CD4-positive, alpha-beta memory T cell (primary cell): ENCODE measurements at regions of chr1 and their contacts with region 1.

Region 1: GRCh38 chr1:150235852-150236613 is at the start of gene ANP32E:
- DNase-seq: peak; percentile 96 to 99 (median 98)
- H3K4me3 ChIP-seq: peak within 1 kb of the TSS; percentile 76 to 100
- H3K4me3 Mint-ChIP-seq: peak within 1 kb of the TSS in 6 of 8 donors; percentile 26 to 96 (median 94)
- H3K27ac ChIP-seq: peak within 1 kb of the TSS; percentile 99
- H3K27ac Mint-ChIP-seq: peak within 1 kb of the TSS in 6 of 7 donors; percentile 96 to 100 (median 99)
- H3K4me1 ChIP-seq: peaks cover 22% of the 10 kb centered on the region
- H3K4me1 Mint-ChIP-seq: peaks cover 12 to 19% (median 16%) of the 10 kb centered on the region in 4 donors
- H3K27me3 ChIP-seq: no peaks in the 10 kb centered on the region
- H3K27me3 Mint-ChIP-seq: no peaks in the 10 kb centered on the region
- total RNA-seq, gene ANP32E: 53.4 to 57.9 TPM

Region 2: DNA sequence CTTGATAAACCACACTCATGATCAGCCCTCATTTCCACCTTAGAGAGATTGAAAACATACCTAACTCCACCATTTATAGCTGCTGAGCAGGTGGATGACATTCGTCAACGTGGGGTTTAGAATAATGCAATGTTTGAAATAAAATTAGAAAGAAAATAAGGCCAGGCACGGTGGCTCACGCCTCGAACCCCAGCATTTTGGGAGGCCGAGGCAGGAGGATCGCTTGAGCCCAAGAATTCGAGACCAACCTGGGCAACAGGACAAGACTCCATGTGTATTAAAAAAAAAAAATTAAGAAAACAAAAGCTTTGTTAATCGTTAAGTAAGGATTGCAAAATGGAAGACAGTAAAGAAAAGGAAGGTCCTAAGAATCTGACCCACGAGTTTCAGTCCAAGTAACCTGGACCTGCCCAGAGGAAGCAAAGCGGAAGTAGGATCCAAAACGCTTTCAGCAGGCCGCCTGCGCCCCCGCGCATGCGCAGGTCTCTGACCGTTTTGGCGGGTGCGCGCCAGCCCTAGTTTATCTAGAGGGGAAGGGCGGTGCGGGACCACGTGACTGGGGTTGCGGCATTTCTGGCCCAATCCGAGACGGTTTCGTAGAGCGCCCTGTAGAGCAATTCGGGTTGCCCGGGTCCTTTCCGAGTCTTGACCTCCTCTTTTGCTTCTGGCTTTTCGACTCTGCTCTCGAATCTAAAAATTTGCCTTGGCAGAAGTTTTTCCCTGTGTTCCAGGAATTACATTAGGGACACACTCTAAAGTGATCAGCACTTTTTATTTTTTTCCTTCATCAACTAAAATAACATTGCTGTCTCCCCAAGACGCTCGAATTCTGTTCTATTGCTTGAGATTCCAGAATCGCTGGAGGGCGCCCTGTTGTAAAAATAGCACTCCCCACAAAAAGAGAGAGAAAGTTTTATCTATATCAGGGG is 22.6 kb before region 1 on chr1:
- CTCF ChIA-PET with region 1: interaction called, 4 read pairs
- POLR2A ChIA-PET with region 1: interaction called, 17 read pairs
- intact Hi-C with region 1: loop called (anchors 1 kb)
- DNase-seq: peak; percentile 87 to 92 (median 89)
- H3K4me3 ChIP-seq: peak overlapping the region; percentile 39 to 42
- H3K4me3 Mint-ChIP-seq: peak overlapping the region; percentile 86 to 95 (median 92)
- H3K27ac ChIP-seq: peak overlapping the region; percentile 67
- H3K27ac Mint-ChIP-seq: peak overlapping the region; percentile 89 to 99 (median 97)
- H3K4me1 ChIP-seq: peaks cover 12% of the 10 kb centered on the region
- H3K4me1 Mint-ChIP-seq: peaks cover 8 to 18% (median 14%) of the 10 kb centered on the region in 4 donors
- H3K27me3 ChIP-seq: no peaks in the 10 kb centered on the region
- H3K27me3 Mint-ChIP-seq: no peaks in the 10 kb centered on the region

Region 3: DNA sequence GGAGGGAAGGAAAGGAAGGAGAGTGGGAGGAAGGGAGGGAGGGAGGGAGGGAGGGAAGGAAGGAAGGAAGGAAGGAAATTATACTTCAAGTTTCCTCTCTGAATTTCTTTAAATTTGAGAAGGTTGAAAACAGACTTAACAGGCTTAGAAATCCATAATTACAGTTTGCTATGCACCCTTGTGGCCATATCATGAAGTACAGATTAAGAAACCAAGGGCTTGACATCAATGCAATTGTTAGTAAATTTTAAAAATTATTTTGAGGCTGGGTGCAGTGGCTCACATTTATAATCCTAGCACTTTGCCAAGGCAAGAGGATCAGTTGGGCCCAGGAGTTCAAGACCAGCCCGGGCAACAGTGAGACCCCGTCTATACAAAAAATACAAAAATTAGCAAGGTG is 14.5 kb before region 1 on chr1:
- CTCF ChIA-PET with region 1: no interaction called
- POLR2A ChIA-PET with region 1: interaction called, 27 read pairs
- intact Hi-C with region 1: no loop called
- DNase-seq: peak in 4 of 5 donors; percentile 13 to 29 (median 21)
- H3K4me3 ChIP-seq: no peak overlapping the region
- H3K4me3 Mint-ChIP-seq: no peak overlapping the region
- H3K27ac ChIP-seq: no peak overlapping the region
- H3K27ac Mint-ChIP-seq: peak overlapping the region in 3 of 7 donors; percentile 48 to 64 (median 57)
- H3K4me1 ChIP-seq: no peaks in the 10 kb centered on the region
- H3K4me1 Mint-ChIP-seq: peaks cover 0 to 6% (median 6%) of the 10 kb centered on the region in 4 donors
- H3K27me3 ChIP-seq: no peaks in the 10 kb centered on the region
- H3K27me3 Mint-ChIP-seq: no peaks in the 10 kb centered on the region

Region 4: GRCh38 chr1:150268705-150269403 is 32.8 kb after region 1 on chr1 and contains the start of gene APH1A:
- CTCF ChIA-PET with region 1: interaction called, 3 read pairs
- POLR2A ChIA-PET with region 1: interaction called, 13 read pairs
- intact Hi-C with region 1: loop called (anchors 1 kb)
- DNase-seq: peak; percentile 89 to 93 (median 91)
- H3K4me3 ChIP-seq: peak within 1 kb of the TSS; percentile 83 to 85
- H3K4me3 Mint-ChIP-seq: peak within 1 kb of the TSS; percentile 92 to 99 (median 97)
- H3K27ac ChIP-seq: peak within 1 kb of the TSS; percentile 96
- H3K27ac Mint-ChIP-seq: peak within 1 kb of the TSS; percentile 96 to 99 (median 99)
- H3K4me1 ChIP-seq: peaks cover 24% of the 10 kb centered on the region
- H3K4me1 Mint-ChIP-seq: peaks cover 18 to 35% (median 27%) of the 10 kb centered on the region in 4 donors
- H3K27me3 ChIP-seq: no peaks in the 10 kb centered on the region
- H3K27me3 Mint-ChIP-seq: no peaks in the 10 kb centered on the region
- total RNA-seq, gene APH1A: 118 to 120 TPM

Region 5: GRCh38 chr1:150281837-150282653 is 46.0 kb after region 1 on chr1 and contains the start of gene CIART:
- CTCF ChIA-PET with region 1: interaction called, 3 read pairs
- POLR2A ChIA-PET with region 1: interaction called, 7 read pairs
- intact Hi-C with region 1: loop called (anchors 1 kb)
- DNase-seq: peak; percentile 81 to 89 (median 88)
- H3K4me3 ChIP-seq: peak within 1 kb of the TSS; percentile 61 to 80
- H3K4me3 Mint-ChIP-seq: peak within 1 kb of the TSS; percentile 83 to 97 (median 89)
- H3K27ac ChIP-seq: peak within 1 kb of the TSS; percentile 57
- H3K27ac Mint-ChIP-seq: peak within 1 kb of the TSS; percentile 87 to 98 (median 96)
- H3K4me1 ChIP-seq: peaks cover 23% of the 10 kb centered on the region
- H3K4me1 Mint-ChIP-seq: peaks cover 15 to 27% (median 24%) of the 10 kb centered on the region in 4 donors
- H3K27me3 ChIP-seq: no peaks in the 10 kb centered on the region
- H3K27me3 Mint-ChIP-seq: no peaks in the 10 kb centered on the region
- total RNA-seq, gene CIART: 0.67 to 0.94 TPM